Posterior cingulate gyrus (tissue), 11 donors: ENCODE measurements at regions of chr3 and their contacts with region 1.

Region 1: GRCh38 chr3:184314363-184314699 is at the start of gene EIF4G1:
- DNase-seq: peak; percentile 87 to 99 (median 92)

Region 2: DNA sequence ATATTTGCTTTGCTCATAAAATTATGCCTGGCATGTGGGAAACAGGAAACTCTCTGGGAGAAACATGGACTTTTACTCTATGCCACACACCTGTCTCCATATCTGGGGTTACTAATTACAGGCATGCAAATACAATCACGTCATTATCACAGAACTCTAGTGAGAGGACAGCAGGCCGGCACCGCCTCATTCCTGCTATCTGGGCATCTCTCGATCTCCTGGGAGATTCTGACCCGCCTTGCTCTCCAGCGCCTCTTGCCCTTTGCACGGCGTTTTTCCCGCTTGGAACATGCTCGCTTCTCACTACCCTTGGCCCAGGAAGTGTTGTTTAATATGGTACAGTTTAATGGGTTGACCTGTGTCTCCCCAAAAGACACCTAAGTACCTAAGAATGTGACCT is 384.2 kb before region 1 on chr3:
- intact Hi-C with region 1: no loop called
- DNase-seq: peak in 1 of 10 donors; percentile 18

Region 3: GRCh38 chr3:183944775-183945174 is 369.6 kb before region 1 on chr3:
- intact Hi-C with region 1: no loop called
- DNase-seq: peak in 1 of 10 donors; percentile 13

Region 4: DNA sequence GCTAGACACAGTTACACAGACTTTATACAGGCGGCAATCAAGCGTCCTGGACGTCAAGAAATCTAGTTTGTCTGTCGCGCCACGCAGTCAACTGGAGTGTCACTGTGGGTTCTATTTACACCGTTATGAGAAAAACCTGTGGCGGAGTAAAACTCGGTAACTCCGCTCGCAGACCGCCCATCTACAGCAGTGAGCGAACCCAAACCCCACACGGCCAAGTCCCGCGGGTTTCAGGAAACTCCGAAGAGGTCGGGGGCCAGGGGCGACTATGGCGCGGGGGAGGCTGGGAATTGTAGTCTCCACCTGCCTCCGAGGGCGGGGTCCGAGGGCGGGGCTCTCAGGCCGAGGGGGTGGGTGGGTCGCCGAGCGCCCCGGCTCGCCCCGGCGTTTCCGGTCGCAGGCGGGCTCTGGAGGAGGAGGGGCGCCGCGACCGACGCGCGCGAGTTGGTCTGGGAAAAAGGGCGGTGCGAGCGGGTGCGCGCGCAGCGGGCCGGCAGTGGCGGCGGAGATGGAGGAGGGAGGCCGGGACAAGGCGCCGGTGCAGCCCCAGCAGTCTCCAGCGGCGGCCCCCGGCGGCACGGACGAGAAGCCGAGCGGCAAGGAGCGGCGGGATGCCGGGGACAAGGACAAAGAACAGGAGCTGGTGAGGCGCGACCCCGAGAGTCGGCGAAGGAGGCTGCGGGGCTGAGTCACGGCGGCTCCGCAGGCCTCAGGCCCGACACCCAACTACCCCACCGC is 15.4 kb before region 1 on chr3 and contains the start of gene PSMD2:
- intact Hi-C with region 1: loop called (anchors 2 kb)
- DNase-seq: peak; percentile 96 to 100 (median 98)

Region 5: DNA sequence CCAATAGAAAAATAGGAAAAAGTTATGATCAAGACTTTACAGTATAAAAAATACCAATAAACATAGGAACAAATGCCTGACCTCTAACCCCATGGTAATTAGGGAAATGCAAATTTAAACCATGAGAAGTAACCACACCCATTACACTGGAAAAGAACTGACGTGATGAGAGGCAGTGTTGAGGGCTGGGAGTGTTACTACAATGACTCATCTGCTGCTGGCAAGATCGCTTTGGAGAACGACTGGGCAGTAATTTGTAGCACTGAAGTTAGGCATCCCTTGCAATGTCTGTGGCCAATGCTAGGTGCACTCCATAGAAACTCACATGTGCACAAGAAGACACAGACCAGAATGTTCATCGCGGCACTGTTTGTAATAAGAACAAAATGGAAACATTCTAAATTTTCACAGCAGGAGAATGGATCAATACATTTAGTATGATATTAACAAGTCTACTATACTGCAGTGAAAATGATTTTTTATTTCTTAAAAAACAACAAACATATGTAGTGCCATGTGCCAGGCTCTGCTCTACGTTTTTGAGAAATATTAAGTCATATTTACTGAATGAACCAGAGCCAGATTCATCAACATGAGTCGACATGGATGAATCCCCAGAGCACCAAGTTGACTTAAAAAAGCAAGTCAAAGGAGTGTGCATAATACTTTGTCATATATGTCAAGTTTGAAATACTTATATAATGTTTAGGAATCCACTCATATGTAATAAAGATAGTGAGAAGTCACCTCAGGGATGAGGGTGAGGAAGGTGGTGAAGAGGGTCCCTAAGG is 209.7 kb after region 1 on chr3:
- intact Hi-C with region 1: no loop called
- DNase-seq: no peak